ENCODE measurements at regions of chr10 and their contacts with region 1.

Region 1: GRCh38 chr10:6401562-6402348 is 178.3 kb downstream of the PRKCQ start:
- DNase-seq: peak; percentile 57 to 70 (median 65)
- H3K4me3 ChIP-seq: no peak overlapping the region
- H3K4me3 Mint-ChIP-seq: peak overlapping the region in 2 of 8 donors; percentile 51 to 63
- H3K27ac ChIP-seq: no peak overlapping the region
- H3K27ac Mint-ChIP-seq: peak overlapping the region; percentile 32 to 90 (median 64)
- H3K4me1 ChIP-seq: peaks cover 16% of the 10 kb centered on the region
- H3K4me1 Mint-ChIP-seq: peaks cover 8 to 24% (median 13%) of the 10 kb centered on the region in 4 donors
- H3K27me3 ChIP-seq: no peaks in the 10 kb centered on the region
- H3K27me3 Mint-ChIP-seq: peaks cover 0 to 1% of the 10 kb centered on the region in 2 donors

Region 2: DNA sequence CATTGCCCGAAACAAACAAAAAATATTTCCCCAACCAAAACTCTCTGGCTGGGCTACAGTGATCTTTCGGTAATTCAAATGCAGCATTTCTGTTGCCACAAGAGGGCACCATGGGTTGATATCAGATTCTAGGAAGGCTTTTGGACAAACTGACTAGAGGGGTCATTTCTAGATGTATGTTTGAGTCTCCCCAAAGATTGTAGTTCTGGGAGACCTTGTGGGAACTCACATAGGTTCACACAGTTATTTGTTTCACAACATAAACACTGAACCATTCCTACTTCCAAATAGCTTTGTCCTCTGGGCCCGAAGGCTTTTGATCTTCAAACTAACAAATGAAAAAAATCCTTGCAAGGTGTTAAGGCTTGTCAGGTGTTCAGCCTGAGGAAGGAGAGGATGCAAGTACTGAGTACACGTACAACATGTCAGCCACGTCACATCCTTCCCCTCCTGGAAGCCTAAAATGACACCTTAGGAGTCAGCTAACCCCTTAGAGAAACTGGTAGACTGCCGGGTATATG is 387.5 kb before region 1 on chr10:
- CTCF ChIA-PET with region 1: interaction called, 20 read pairs
- POLR2A ChIA-PET with region 1: interaction called, 5 read pairs
- intact Hi-C with region 1: no loop called
- DNase-seq: peak; percentile 76 to 92 (median 83)
- H3K4me3 ChIP-seq: no peak overlapping the region
- H3K4me3 Mint-ChIP-seq: peak overlapping the region in 6 of 8 donors; percentile 26 to 82 (median 40)
- H3K27ac ChIP-seq: peak overlapping the region; percentile 70
- H3K27ac Mint-ChIP-seq: peak overlapping the region; percentile 92 to 99 (median 97)
- H3K4me1 ChIP-seq: peaks cover 23% of the 10 kb centered on the region
- H3K4me1 Mint-ChIP-seq: peaks cover 16 to 41% (median 20%) of the 10 kb centered on the region in 4 donors
- H3K27me3 ChIP-seq: no peaks in the 10 kb centered on the region
- H3K27me3 Mint-ChIP-seq: no peaks in the 10 kb centered on the region

Region 3: GRCh38 chr10:6136215-6137201 is 265.2 kb before region 1 on chr10:
- CTCF ChIA-PET with region 1: interaction called, 17 read pairs
- POLR2A ChIA-PET with region 1: interaction called, 3 read pairs
- intact Hi-C with region 1: no loop called
- DNase-seq: peak in 1 of 5 donors; percentile 61
- H3K4me3 ChIP-seq: no peak overlapping the region
- H3K4me3 Mint-ChIP-seq: peak overlapping the region in 7 of 8 donors; percentile 36 to 79 (median 63)
- H3K27ac ChIP-seq: peak overlapping the region; percentile 27
- H3K27ac Mint-ChIP-seq: peak overlapping the region; percentile 59 to 95 (median 89)
- H3K4me1 ChIP-seq: peaks cover 53% of the 10 kb centered on the region
- H3K4me1 Mint-ChIP-seq: peaks cover 43 to 64% (median 56%) of the 10 kb centered on the region in 4 donors
- H3K27me3 ChIP-seq: no peaks in the 10 kb centered on the region
- H3K27me3 Mint-ChIP-seq: no peaks in the 10 kb centered on the region

Region 4: GRCh38 chr10:6163364-6164270 is 238.1 kb before region 1 on chr10:
- CTCF ChIA-PET with region 1: interaction called, 19 read pairs
- POLR2A ChIA-PET with region 1: interaction called, 11 read pairs
- intact Hi-C with region 1: no loop called
- DNase-seq: peak; percentile 90 to 94 (median 91)
- H3K4me3 ChIP-seq: peak overlapping the region; percentile 77 to 84
- H3K4me3 Mint-ChIP-seq: peak overlapping the region; percentile 77 to 95 (median 92)
- H3K27ac ChIP-seq: peak overlapping the region; percentile 89
- H3K27ac Mint-ChIP-seq: peak overlapping the region; percentile 92 to 98 (median 97)
- H3K4me1 ChIP-seq: peaks cover 55% of the 10 kb centered on the region
- H3K4me1 Mint-ChIP-seq: peaks cover 28 to 64% (median 46%) of the 10 kb centered on the region in 4 donors
- H3K27me3 ChIP-seq: no peaks in the 10 kb centered on the region
- H3K27me3 Mint-ChIP-seq: no peaks in the 10 kb centered on the region

Region 5: GRCh38 chr10:6239213-6239991 is 162.4 kb before region 1 on chr10:
- CTCF ChIA-PET with region 1: interaction called, 11 read pairs
- POLR2A ChIA-PET with region 1: no interaction called
- intact Hi-C with region 1: no loop called
- DNase-seq: peak in 4 of 5 donors; percentile 14 to 84 (median 20)
- H3K4me3 ChIP-seq: no peak overlapping the region
- H3K4me3 Mint-ChIP-seq: peak overlapping the region in 2 of 8 donors; percentile 13 to 32
- H3K27ac ChIP-seq: no peak overlapping the region
- H3K27ac Mint-ChIP-seq: peak overlapping the region; percentile 20 to 78 (median 63)
- H3K4me1 ChIP-seq: peaks cover 12% of the 10 kb centered on the region
- H3K4me1 Mint-ChIP-seq: peaks cover 12 to 22% (median 13%) of the 10 kb centered on the region in 4 donors
- H3K27me3 ChIP-seq: no peaks in the 10 kb centered on the region
- H3K27me3 Mint-ChIP-seq: no peaks in the 10 kb centered on the region

Region 6: DNA sequence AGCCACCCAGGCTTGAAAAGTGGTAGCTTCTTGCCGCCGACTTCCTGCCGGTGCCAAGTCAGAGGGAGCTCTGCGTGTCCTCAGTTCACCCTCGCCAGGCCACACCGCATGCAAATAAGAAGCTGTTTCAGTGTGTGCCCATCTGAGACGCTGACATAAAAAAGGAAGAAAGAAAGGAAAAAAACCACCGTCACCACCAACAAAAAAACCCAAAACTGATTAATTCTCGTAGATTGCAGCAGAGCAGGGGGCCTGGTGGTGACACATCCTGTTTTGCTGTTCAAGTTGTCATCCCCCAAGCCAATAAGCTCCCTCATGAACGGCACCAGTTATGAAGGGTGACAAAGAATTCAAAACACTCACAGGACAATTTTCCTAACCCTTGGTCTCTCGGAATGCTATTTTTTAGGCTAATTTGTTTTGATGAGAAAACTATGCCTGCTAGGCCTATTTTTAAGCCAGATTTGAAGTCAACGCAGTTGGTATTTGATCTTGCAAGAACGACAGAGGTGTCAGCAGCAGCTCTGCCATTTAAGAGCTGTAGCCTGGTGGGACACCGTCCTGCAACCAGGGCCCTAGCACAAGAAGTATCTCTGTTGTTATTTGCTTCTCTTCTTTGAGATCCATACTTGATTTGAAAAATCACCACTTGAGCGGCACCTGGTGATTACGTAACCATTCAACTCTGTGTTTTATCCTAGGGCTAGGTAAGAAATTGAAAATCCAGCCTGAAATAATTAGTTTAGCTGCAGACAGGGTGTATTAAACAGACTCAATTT is 53.5 kb before region 1 on chr10:
- CTCF ChIA-PET with region 1: interaction called, 39 read pairs
- POLR2A ChIA-PET with region 1: interaction called, 24 read pairs
- intact Hi-C with region 1: loop called (anchors 1 kb)
- DNase-seq: peak; percentile 87 to 95 (median 89)
- H3K4me3 ChIP-seq: peak overlapping the region in 1 of 2 donors; percentile 43
- H3K4me3 Mint-ChIP-seq: peak overlapping the region; percentile 77 to 90 (median 80)
- H3K27ac ChIP-seq: peak overlapping the region; percentile 55
- H3K27ac Mint-ChIP-seq: peak overlapping the region; percentile 93 to 97 (median 96)
- H3K4me1 ChIP-seq: peaks cover 31% of the 10 kb centered on the region
- H3K4me1 Mint-ChIP-seq: peaks cover 35 to 56% (median 45%) of the 10 kb centered on the region in 4 donors
- H3K27me3 ChIP-seq: no peaks in the 10 kb centered on the region
- H3K27me3 Mint-ChIP-seq: no peaks in the 10 kb centered on the region